Mammary epithelial cell (primary cell): ENCODE measurements at regions of chr7 and their contacts with region 1.

Region 1: GRCh38 chr7:66301737-66302136 is 96.6 kb downstream of the TPST1 start:
- DNase-seq: no peak
- H3K4me3 ChIP-seq: no peak overlapping the region
- H3K27ac ChIP-seq: no peak overlapping the region
- H3K4me1 ChIP-seq: peaks cover 26% of the 10 kb centered on the region
- H3K27me3 ChIP-seq: no peaks in the 10 kb centered on the region
- CTCF ChIP-seq: no peak

Region 2: DNA sequence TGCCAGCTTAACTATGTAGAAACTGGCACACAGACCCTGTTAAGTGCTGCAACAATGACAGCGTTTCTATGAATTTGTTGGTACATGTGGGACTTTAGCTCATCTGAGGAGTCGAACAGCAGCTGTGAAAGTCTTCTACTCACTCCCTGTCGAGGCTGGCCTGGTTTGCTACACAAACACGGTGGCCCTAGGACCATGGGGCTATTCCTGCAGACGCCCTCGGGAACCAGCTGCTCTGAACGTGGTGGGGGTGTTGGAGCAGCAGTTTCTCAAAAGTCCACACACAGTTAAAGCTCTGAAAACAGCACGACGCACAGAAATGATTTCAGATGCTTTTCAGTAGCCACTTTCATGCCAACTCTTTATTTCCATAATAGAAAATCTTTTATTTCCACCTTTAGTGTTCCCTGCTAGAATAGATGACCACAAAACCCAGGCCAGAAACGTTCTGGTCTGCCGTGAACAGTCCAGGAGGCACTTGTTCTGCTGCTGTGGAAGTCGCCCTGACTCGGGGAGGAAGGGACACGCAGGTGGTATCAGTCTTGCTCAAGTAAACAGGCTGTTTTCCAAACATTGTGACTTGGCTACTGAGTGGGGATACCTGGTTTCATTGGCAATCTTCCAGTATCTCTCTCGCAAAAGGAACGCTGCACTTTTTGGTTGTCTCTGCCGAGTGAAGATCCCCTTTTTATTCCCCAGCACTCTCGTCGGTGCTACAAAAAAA is 341.2 kb before region 1 on chr7:
- CTCF ChIA-PET with region 1: no interaction called
- dilution Hi-C with region 1: no loop called
- in situ Hi-C with region 1: no loop called
- intact Hi-C with region 1: no loop called
- DNase-seq: no peak
- H3K4me3 ChIP-seq: no peak overlapping the region
- H3K27ac ChIP-seq: no peak overlapping the region
- H3K4me1 ChIP-seq: no peaks in the 10 kb centered on the region
- H3K27me3 ChIP-seq: no peaks in the 10 kb centered on the region
- CTCF ChIP-seq: no peak

Region 3: GRCh38 chr7:66267249-66267648 is 34.5 kb before region 1 on chr7:
- CTCF ChIA-PET with region 1: no interaction called
- dilution Hi-C with region 1: no loop called
- in situ Hi-C with region 1: no loop called
- intact Hi-C with region 1: loop called (anchors 2 kb)
- DNase-seq: peak; percentile 74
- H3K4me3 ChIP-seq: no peak overlapping the region
- H3K27ac ChIP-seq: peak overlapping the region; percentile 22
- H3K4me1 ChIP-seq: peaks cover 5% of the 10 kb centered on the region
- H3K27me3 ChIP-seq: no peaks in the 10 kb centered on the region
- CTCF ChIP-seq: no peak

Region 4: GRCh38 chr7:66344166-66344565 is 42.4 kb after region 1 on chr7:
- CTCF ChIA-PET with region 1: no interaction called
- dilution Hi-C with region 1: no loop called
- in situ Hi-C with region 1: no loop called
- intact Hi-C with region 1: no loop called
- DNase-seq: peak; percentile 61
- H3K4me3 ChIP-seq: no peak overlapping the region
- H3K27ac ChIP-seq: no peak overlapping the region
- H3K4me1 ChIP-seq: peaks cover 13% of the 10 kb centered on the region
- H3K27me3 ChIP-seq: no peaks in the 10 kb centered on the region
- CTCF ChIP-seq: no peak

Region 5: GRCh38 chr7:66452165-66452564 is 150.4 kb after region 1 on chr7:
- CTCF ChIA-PET with region 1: no interaction called
- dilution Hi-C with region 1: no loop called
- in situ Hi-C with region 1: no loop called
- intact Hi-C with region 1: no loop called
- DNase-seq: no peak
- H3K4me3 ChIP-seq: no peak overlapping the region
- H3K27ac ChIP-seq: no peak overlapping the region
- H3K4me1 ChIP-seq: no peaks in the 10 kb centered on the region
- H3K27me3 ChIP-seq: no peaks in the 10 kb centered on the region
- CTCF ChIP-seq: no peak